Sigmoid colon (tissue), 7 donors: ENCODE measurements at regions of chr4 and their contacts with region 1.

Region 1: DNA sequence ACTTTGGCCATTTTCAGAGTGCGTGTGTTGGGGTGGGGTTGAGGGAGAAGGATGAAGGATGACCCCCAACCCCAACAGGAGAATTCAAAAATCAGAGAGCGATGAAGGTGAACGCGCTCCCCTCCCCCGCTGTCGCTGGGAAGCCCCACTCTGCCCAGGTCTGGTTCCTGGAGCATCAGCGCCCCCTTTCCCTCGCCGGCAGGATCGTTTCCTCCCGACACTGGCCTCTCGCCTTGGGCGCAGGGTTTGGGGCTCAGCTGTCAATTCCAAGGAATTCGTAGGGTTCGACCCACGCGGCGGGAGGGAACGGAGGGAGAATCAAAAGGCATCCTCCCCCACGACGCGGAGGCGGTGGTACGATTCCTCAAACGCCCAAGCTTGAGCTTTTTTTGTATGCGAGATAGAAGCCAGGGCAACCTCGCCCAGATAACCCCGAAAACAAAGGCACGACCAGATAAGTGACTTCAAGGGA is 1.0 kb upstream of the PDGFRA start:
- DNase-seq: peak; percentile 89
- H3K4me3 ChIP-seq: peak overlapping the region; percentile 13 to 45 (median 36)
- H3K27ac ChIP-seq: peak overlapping the region; percentile 64 to 75 (median 66)
- H3K4me1 ChIP-seq: peaks cover 0 to 66% (median 64%) of the 10 kb centered on the region in 4 donors
- H3K27me3 ChIP-seq: peaks cover 52 to 100% (median 94%) of the 10 kb centered on the region in 3 donors
- CTCF ChIP-seq: peak; percentile 33 to 52 (median 44)
- EP300 ChIP-seq: no peak
- POLR2A ChIP-seq: no peak

Region 2: DNA sequence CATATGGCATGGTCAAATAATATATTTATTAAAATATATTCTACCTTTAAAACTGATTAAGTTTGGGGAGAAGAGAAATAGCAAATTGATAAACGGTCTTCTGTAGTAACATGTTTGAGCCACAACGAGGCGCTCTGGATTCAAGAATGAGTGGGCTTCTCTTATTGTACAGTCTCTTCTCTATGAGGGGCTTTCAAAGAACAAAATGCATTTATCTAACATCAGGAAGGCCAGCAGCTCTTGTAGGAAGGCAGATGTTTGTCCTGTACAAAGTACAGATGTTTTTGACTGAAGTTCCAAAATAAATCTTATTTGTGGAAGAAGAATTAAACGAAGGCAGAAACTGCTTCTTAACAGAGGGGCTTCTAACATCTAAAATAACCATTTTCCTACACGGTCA is 1212.4 kb before region 1 on chr4:
- intact Hi-C with region 1: loop called (anchors 5 kb)
- DNase-seq: peak; percentile 71
- H3K4me3 ChIP-seq: no peak overlapping the region
- H3K27ac ChIP-seq: peak overlapping the region in 1 of 4 donors; percentile 15
- H3K4me1 ChIP-seq: peaks cover 0 to 44% (median 30%) of the 10 kb centered on the region in 4 donors
- H3K27me3 ChIP-seq: no peaks in the 10 kb centered on the region
- CTCF ChIP-seq: peak in 2 of 4 experiments; percentile 22 to 41
- EP300 ChIP-seq: no peak
- POLR2A ChIP-seq: no peak

Region 3: GRCh38 chr4:54050214-54050904 is 177.7 kb before region 1 on chr4:
- intact Hi-C with region 1: no loop called
- DNase-seq: no peak
- H3K4me3 ChIP-seq: no peak overlapping the region
- H3K27ac ChIP-seq: no peak overlapping the region
- H3K4me1 ChIP-seq: peaks cover 0 to 30% (median 16%) of the 10 kb centered on the region in 4 donors
- H3K27me3 ChIP-seq: no peaks in the 10 kb centered on the region
- CTCF ChIP-seq: no peak
- EP300 ChIP-seq: no peak
- POLR2A ChIP-seq: no peak